OCI-LY7 (cell line): ENCODE measurements at regions of chr14 and their contacts with region 1.

Region 1: DNA sequence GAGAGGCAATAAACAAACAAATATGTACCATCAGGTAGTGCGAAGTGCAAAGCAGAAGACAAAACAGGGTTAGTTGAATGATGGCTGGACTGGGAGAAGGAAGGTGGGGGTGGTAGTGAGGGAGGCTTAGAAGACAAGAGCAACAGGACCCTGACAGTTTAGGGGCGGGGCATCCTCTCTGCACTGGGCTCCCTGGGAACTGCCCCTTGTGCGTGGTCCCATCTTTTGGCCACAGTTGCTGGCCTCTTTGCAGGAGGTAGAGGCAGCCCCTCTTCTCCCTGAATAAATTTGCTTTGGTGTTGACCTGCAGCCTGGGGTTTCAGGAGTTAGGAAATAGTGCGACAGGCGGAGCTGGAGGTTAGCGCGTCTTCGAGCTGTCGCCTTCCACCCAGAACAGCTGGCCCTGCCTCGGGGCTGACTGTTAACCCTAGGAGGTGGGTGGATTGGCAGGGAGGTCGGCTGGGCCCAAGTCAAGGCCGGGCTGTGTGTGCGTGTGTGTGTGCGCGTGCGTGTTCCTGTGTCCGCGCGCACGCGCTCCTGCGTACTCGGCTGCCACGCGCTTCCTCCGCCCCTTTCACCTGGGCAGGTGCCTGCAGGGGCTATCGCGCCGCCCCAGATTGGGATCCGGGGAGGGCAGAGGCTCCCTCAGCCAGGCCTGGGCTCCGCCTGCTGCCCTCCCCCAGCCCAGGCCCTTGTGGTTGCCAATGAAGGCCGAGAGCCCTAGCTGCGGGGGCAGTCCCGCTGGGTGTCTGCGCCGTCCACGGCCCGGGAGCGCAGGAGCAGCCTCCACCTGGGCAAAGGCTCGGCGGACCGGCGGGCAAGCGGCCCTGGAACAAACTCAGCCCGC is 180.8 kb downstream of the ADCK1 start:
- DNase-seq: no peak
- H3K4me3 ChIP-seq: no peak overlapping the region
- H3K27ac ChIP-seq: no peak overlapping the region
- H3K4me1 ChIP-seq: no peaks in the 10 kb centered on the region
- CTCF ChIP-seq: no peak

Region 2: DNA sequence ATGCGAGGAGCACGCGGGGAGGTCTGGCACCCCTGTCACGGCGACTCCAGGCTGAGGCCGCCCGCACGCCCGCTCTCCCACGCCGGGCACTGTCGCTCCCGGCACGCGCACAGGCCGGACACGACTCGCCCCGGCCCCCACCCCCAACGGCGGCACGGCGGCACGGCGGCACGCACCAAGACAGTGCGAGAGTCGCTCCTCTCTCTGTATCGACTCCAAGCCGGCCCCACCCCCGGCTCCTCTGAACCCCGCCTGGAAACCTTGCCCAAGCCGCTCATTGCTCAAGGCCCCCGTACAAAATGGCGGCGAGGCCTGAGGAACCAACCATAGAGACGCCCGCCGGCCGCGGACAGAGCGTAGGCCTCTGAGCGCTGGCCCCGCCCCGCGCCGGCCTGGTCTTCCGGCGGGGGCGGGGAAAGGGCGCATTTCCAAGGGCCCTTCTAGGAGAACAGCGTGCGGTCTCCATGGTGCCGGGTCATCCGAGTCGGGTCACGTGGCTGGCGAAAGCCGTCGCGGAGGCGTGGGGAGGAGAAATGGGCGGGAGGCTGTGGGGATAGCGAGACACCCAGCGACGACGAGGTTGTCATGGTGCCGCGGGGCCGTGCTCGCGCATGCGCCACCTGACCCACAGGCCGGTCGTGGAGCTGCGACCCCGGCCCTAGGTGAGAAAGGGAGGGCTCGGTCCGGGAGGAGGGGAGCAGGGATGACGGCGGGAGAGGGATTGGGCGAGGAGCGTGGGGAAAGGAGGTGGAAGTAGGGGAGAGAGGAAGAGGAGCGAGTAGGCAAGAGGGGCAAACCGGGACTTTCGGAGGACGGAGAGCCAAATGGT is 882.8 kb before region 1 on chr14 and contains the start of gene CIPC:
- CTCF ChIA-PET with region 1: no interaction called
- POLR2A ChIA-PET with region 1: no interaction called
- intact Hi-C with region 1: no loop called
- DNase-seq: peak; percentile 99
- H3K4me3 ChIP-seq: peak within 1 kb of the TSS; percentile 82
- H3K27ac ChIP-seq: peak within 1 kb of the TSS; percentile 76
- H3K4me1 ChIP-seq: peaks cover 49% of the 10 kb centered on the region
- CTCF ChIP-seq: no peak
- total RNA-seq, gene CIPC: 31.7 and 43.4 TPM in 2 replicates

Region 3: GRCh38 chr14:77654001-77654441 is 326.7 kb before region 1 on chr14:
- CTCF ChIA-PET with region 1: no interaction called
- POLR2A ChIA-PET with region 1: no interaction called
- intact Hi-C with region 1: loop called (anchors 10 kb)
- DNase-seq: no peak
- H3K4me3 ChIP-seq: no peak overlapping the region
- H3K27ac ChIP-seq: no peak overlapping the region
- H3K4me1 ChIP-seq: peaks cover 6% of the 10 kb centered on the region
- CTCF ChIP-seq: no peak